H1 (cell line): ENCODE measurements at regions of chr15 and their contacts with region 1.

Region 1: DNA sequence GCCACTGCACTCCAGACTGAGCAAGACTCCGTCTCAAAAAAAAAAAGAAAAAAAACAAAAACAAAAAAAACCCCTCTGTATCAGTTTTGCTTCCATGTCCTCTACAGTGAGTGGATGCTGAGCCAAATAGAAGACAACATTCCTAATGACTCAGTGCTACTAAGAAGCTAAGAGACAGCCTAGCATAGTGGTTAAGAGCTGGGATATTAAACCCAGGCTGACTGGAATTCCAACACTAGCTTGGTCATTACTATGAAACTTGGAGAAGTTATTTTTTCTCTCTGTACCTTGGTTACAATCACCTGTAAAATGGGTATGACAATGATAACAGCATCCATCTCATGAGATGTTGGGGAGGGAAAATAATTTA is 60.9 kb upstream of the PYGO1 start:
- DNase-seq: no peak
- H3K4me3 ChIP-seq: no peak overlapping the region
- H3K27ac ChIP-seq: no peak overlapping the region
- H3K4me1 ChIP-seq: peaks cover 2 to 6% (median 5%) of the 10 kb centered on the region in 4 experiments; a peak in 5 of 7 replicates
- H3K27me3 ChIP-seq: no peaks in the 10 kb centered on the region
- CTCF ChIP-seq: no peak
- EP300 ChIP-seq: no peak
- POLR2A ChIP-seq: no peak
- RAD21 ChIP-seq: no peak

Region 2: DNA sequence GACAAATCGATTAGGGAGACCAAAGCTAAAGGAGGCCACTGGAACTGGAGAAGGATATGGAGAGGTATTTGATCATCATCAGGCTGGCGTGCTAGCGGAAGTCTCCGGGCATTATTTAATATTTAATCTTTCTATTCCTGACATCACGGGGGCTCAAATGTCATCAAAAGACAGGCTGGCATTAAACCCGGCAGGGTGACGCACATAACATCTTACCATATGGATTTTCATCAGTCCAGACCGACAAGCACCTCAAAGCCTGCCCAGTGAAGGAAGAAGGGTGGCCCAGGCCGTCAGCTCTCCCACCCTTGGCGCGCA is 241.4 kb before region 1 on chr15:
- CTCF ChIA-PET with region 1: no interaction called
- POLR2A ChIA-PET with region 1: no interaction called
- DNase-seq: no peak
- H3K4me3 ChIP-seq: peak overlapping the region; percentile 62 to 84 (median 77)
- H3K27ac ChIP-seq: no peak overlapping the region
- H3K4me1 ChIP-seq: no peaks in the 10 kb centered on the region; a peak in 1 of 7 replicates
- H3K27me3 ChIP-seq: no peaks in the 10 kb centered on the region
- CTCF ChIP-seq: no peak
- EP300 ChIP-seq: no peak
- POLR2A ChIP-seq: no peak
- RAD21 ChIP-seq: no peak

Region 3: DNA sequence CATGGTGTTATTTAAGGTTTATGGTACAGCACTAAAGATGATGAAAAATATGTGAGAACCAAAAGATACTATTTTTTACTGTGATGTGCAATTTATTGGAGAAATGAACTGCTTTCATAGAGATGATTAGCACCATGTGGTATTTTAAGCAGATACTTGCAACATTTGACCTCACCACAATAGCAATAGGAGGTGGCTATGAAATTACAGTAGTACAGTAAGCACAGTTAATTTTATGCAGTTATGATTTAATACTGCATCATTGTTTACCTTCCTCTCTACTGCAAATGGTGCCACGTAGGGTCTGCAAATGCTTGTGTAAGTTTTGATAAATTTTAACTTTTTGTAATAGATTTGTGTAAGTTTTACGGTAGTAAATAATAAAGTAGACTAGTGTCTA is 74.9 kb before region 1 on chr15:
- CTCF ChIA-PET with region 1: no interaction called
- POLR2A ChIA-PET with region 1: no interaction called
- DNase-seq: no peak
- H3K4me3 ChIP-seq: no peak overlapping the region
- H3K27ac ChIP-seq: no peak overlapping the region
- H3K4me1 ChIP-seq: no peaks in the 10 kb centered on the region
- H3K27me3 ChIP-seq: no peaks in the 10 kb centered on the region
- CTCF ChIP-seq: no peak
- EP300 ChIP-seq: no peak
- POLR2A ChIP-seq: no peak
- RAD21 ChIP-seq: no peak

Region 4: GRCh38 chr15:55619783-55620182 is 29.3 kb before region 1 on chr15:
- CTCF ChIA-PET with region 1: no interaction called
- POLR2A ChIA-PET with region 1: no interaction called
- DNase-seq: no peak
- H3K4me3 ChIP-seq: no peak overlapping the region
- H3K27ac ChIP-seq: no peak overlapping the region
- H3K4me1 ChIP-seq: peaks cover 0 to 4% (median under 1%) of the 10 kb centered on the region in 4 experiments; a peak in 3 of 7 replicates
- H3K27me3 ChIP-seq: no peaks in the 10 kb centered on the region
- CTCF ChIP-seq: no peak
- EP300 ChIP-seq: no peak
- POLR2A ChIP-seq: no peak
- RAD21 ChIP-seq: no peak

Region 5: DNA sequence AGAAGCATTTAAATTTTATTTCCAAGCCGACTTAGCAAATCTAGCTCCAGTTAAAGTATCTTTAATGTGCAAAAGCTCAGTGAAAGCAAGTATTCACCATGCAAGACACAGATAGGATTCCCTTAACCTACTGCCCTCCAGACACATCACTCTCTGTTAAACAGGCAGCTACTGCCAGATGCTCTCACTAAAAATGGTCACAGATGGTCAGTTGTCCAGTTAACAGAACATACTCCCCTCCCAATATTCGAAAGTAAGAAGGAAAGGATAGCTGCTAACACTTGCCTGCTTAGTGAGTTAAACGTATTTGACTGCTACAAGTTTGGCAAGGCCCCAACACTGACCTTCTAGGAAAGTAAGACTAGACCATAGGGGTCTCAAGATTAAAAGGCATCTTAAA is 20.2 kb after region 1 on chr15:
- CTCF ChIA-PET with region 1: interaction called, 20 read pairs
- POLR2A ChIA-PET with region 1: interaction called, 4 read pairs
- DNase-seq: no peak
- H3K4me3 ChIP-seq: no peak overlapping the region
- H3K27ac ChIP-seq: no peak overlapping the region
- H3K4me1 ChIP-seq: peaks cover 0 to 3% (median 0%) of the 10 kb centered on the region in 4 experiments; a peak in 2 of 7 replicates
- H3K27me3 ChIP-seq: no peaks in the 10 kb centered on the region
- CTCF ChIP-seq: no peak
- EP300 ChIP-seq: no peak
- POLR2A ChIP-seq: no peak
- RAD21 ChIP-seq: no peak

Region 6: DNA sequence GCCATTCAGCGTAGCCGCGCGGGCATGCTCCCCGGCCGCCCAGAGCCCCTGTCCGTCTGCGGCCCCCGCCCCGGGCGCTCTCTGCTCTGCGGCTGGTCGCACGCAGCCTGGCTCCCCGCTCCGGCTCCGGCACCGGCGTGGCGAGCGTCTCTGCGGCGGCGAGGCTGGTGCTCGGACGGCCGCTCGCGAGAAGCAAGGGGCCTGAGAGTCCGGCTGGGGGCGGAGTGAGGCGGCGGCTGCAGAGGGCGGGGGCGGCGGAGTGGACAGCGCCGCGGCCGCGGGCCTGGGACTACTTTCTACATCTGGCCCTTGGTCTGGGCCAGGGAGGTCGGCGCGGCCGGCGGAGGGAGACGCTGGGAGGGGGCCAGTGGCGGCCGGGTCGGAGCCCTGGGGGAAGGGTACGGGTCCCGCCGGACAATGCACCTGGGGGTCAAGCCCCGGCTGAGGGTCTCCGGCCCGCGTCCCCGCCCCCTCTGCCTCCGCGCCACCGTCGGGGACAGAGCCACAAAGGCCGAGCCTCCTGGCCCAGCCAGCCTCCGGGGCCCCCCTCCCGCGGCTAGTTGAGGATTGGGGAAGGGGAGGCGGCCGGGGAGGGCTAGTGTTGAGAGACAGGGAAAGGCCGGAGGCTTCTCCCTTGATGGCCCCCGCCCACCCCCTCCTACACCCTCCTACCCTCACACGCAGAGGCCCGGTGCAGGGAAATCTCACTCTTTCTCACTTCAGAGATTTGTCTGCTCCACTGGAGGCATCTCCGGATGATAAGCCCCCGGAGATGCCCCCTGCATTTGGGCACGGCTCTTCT is 94.1 kb after region 1 on chr15 and contains the start of gene PRTG:
- CTCF ChIA-PET with region 1: interaction called, 14 read pairs
- POLR2A ChIA-PET with region 1: no interaction called
- DNase-seq: peak in 1 of 2 experiments; percentile 76
- H3K4me3 ChIP-seq: peak within 1 kb of the TSS; percentile 34 to 78 (median 52)
- H3K27ac ChIP-seq: no peak within 1 kb of the TSS
- H3K4me1 ChIP-seq: peaks cover 0 to 5% (median 2%) of the 10 kb centered on the region in 4 experiments; a peak in 4 of 7 replicates
- H3K27me3 ChIP-seq: peaks cover 63 to 79% (median 75%) of the 10 kb centered on the region in 4 experiments
- CTCF ChIP-seq: no peak
- EP300 ChIP-seq: 0 out of 3 replicates have a peak, but pooled peaks of 1 of the 2 experiments have one; percentile 30
- POLR2A ChIP-seq: peak in 1 of 2 experiments; percentile 40; a peak in 2 of 3 replicates
- RAD21 ChIP-seq: no peak
- total RNA-seq, gene PRTG: 3.2 and 3.4 TPM in 2 replicates

Region 7: GRCh38 chr15:55789066-55789660 is 140.1 kb after region 1 on chr15:
- CTCF ChIA-PET with region 1: interaction called, 201 read pairs
- POLR2A ChIA-PET with region 1: no interaction called
- DNase-seq: peak in 1 of 2 experiments; percentile 88
- H3K4me3 ChIP-seq: no peak overlapping the region
- H3K27ac ChIP-seq: no peak overlapping the region
- H3K4me1 ChIP-seq: peaks cover 0 to 6% (median 2%) of the 10 kb centered on the region in 4 experiments; a peak in 3 of 7 replicates
- H3K27me3 ChIP-seq: no peaks in the 10 kb centered on the region
- CTCF ChIP-seq: peak; percentile 69 to 85 (median 82)
- EP300 ChIP-seq: no peak
- POLR2A ChIP-seq: no peak
- RAD21 ChIP-seq: peak; percentile 47 to 59

Region 8: DNA sequence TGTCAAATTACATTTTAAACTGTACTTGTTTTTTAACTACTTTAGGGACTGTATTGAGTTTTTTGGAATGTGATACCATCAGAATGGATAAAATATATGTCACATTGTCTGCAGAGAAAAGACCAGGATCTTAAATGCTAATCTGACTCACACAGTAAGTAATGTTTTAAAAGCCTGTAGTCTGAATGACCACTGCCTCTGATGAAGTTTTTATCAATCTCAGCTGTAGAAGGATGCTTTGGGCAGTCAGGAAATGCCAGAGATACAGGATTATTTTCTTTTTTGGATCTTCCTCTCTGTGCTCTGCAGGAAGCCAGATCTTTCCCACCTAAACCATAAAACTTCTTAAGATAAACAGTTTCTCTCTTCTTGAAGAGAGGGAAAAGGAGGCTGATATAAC is 167.0 kb after region 1 on chr15:
- CTCF ChIA-PET with region 1: interaction called, 13 read pairs
- POLR2A ChIA-PET with region 1: no interaction called
- DNase-seq: no peak
- H3K4me3 ChIP-seq: no peak overlapping the region
- H3K27ac ChIP-seq: no peak overlapping the region
- H3K4me1 ChIP-seq: no peaks in the 10 kb centered on the region
- H3K27me3 ChIP-seq: no peaks in the 10 kb centered on the region
- CTCF ChIP-seq: no peak
- EP300 ChIP-seq: no peak
- POLR2A ChIP-seq: no peak
- RAD21 ChIP-seq: no peak

Region 9: GRCh38 chr15:55846116-55846707 is 197.2 kb after region 1 on chr15:
- CTCF ChIA-PET with region 1: interaction called, 22 read pairs
- POLR2A ChIA-PET with region 1: no interaction called
- DNase-seq: peak; percentile 31 to 57
- H3K4me3 ChIP-seq: no peak overlapping the region
- H3K27ac ChIP-seq: no peak overlapping the region
- H3K4me1 ChIP-seq: no peaks in the 10 kb centered on the region
- H3K27me3 ChIP-seq: no peaks in the 10 kb centered on the region
- CTCF ChIP-seq: peak in 2 of 3 experiments; percentile 69 to 79; a peak in 3 of 4 replicates
- EP300 ChIP-seq: no peak
- POLR2A ChIP-seq: no peak
- RAD21 ChIP-seq: peak; percentile 80 to 85